Ascending aorta (tissue), 2 donors: ENCODE measurements at regions of chr6 and their contacts with region 1.

Region 1: GRCh38 chr6:149082286-149082707 is 235.2 kb upstream of the TAB2 start:
- DNase-seq: peak in 1 of 2 donors; percentile 87
- H3K4me3 ChIP-seq: no peak overlapping the region
- H3K27ac ChIP-seq: no peak overlapping the region
- H3K4me1 ChIP-seq: peaks cover 4 to 31% of the 10 kb centered on the region in 2 donors
- H3K27me3 ChIP-seq: no peaks in the 10 kb centered on the region
- CTCF ChIP-seq: peak; percentile 54 to 75 (median 65)

Region 2: DNA sequence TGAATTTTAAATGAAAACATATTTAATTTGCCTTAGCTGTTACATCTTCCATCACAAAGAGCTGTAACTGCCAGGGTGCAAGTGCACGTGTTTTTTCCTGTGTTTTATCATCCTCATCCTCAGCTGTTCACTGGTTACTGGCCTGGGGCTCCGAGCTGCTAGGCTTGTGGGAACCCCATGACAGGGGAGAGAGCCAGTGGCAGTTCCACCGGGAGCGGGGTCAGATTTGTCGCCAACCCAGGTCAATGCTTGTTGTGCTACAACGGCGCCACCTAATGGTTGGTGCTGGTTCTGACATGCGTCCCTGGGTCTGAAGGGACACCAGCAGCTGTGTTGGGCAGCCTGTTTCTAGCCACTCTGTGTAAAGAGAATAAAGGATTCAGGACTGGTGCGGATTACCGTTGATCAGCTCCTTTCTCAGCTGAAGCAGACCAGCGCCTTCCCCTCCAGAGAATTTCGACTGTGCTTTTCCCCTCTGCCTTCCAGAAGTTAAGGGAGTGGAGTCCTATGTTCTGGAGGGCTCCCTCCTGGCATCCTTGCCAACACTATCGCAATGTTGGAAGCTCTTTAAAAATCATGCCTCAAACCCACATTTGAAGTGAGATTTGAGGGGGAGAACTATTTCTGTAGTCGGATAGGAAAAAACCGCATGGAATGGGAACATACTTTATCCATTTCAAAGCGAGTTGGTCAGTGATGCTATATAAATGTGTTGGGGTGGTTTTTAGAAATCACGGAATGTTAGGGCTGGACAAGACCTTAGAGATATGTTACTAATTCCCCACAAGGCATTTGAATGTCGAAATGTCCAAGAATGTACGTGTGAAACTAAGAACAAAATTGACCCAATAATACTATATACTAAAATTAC is 349.8 kb after region 1 on chr6:
- intact Hi-C with region 1: loop called (anchors 1 kb)
- DNase-seq: peak; percentile 67 to 95
- H3K4me3 ChIP-seq: no peak overlapping the region
- H3K27ac ChIP-seq: no peak overlapping the region
- H3K4me1 ChIP-seq: peaks cover 0 to 4% of the 10 kb centered on the region in 2 donors
- H3K27me3 ChIP-seq: no peaks in the 10 kb centered on the region
- CTCF ChIP-seq: peak; percentile 92 to 96 (median 94)

Region 3: DNA sequence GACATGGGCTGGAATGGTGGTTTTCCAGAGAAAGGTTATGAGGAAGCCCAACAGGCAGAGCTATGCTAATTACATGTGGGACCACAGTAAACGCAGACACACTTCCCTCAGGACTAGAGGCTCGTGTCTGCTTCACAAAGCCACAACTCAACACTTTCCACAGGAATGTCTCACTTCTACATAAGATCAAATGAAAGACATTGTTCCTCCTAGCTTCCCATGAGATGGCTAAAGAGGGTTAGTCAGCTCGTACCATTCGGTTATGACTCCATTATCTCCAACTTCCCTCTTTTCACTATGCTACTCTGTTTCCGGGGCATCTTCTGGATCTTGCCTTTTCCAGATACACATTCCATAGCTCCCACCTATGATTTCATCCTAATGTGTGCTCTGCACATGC is 431.6 kb after region 1 on chr6:
- intact Hi-C with region 1: loop called (anchors 5 kb)
- DNase-seq: no peak
- H3K4me3 ChIP-seq: no peak overlapping the region
- H3K27ac ChIP-seq: no peak overlapping the region
- H3K4me1 ChIP-seq: no peaks in the 10 kb centered on the region
- H3K27me3 ChIP-seq: no peaks in the 10 kb centered on the region
- CTCF ChIP-seq: no peak